ENCODE measurements at regions of chr10 and their contacts with region 1.

Region 1: GRCh38 chr10:31864834-31865518 is 63.7 kb downstream of the ARHGAP12 start:
- DNase-seq: no peak
- ATAC-seq: no peak
- H3K4me3 Mint-ChIP-seq: no peak overlapping the region
- H3K27ac Mint-ChIP-seq: peak overlapping the region; percentile 3
- H3K4me1 Mint-ChIP-seq: peaks cover 30% of the 10 kb centered on the region
- H3K27me3 Mint-ChIP-seq: no peaks in the 10 kb centered on the region

Region 2: DNA sequence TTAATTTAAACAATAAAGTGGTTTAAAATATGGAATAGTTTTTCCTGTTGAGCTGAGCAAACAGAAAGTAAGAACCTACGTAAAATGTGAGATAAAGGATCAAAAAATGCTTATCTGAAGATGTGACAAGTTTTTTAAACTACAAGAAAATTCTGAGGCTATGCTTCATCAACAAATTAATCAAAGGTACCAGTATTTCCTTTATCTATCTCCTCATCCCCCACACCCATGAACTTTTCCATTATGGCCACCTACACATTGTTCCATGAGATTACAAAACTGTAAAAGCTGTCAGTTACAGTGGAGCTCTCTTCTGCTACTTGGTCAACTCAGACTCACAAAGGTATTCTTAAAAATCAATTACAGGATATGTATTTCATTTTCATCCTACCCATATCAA is 13.8 kb before region 1 on chr10:
- CTCF ChIA-PET with region 1: interaction called, 12 read pairs
- POLR2A ChIA-PET with region 1: interaction called, 3 read pairs
- intact Hi-C with region 1: no loop called
- DNase-seq: no peak
- ATAC-seq: no peak
- H3K4me3 Mint-ChIP-seq: no peak overlapping the region
- H3K27ac Mint-ChIP-seq: no peak overlapping the region
- H3K4me1 Mint-ChIP-seq: peaks cover 19% of the 10 kb centered on the region
- H3K27me3 Mint-ChIP-seq: no peaks in the 10 kb centered on the region

Region 3: GRCh38 chr10:31875608-31876007 is 10.6 kb after region 1 on chr10:
- CTCF ChIA-PET with region 1: interaction called, 14 read pairs
- POLR2A ChIA-PET with region 1: no interaction called
- intact Hi-C with region 1: no loop called
- DNase-seq: peak; percentile 28
- ATAC-seq: peak; percentile 65
- H3K4me3 Mint-ChIP-seq: no peak overlapping the region
- H3K27ac Mint-ChIP-seq: no peak overlapping the region
- H3K4me1 Mint-ChIP-seq: peaks cover 35% of the 10 kb centered on the region
- H3K27me3 Mint-ChIP-seq: no peaks in the 10 kb centered on the region

Region 4: GRCh38 chr10:31908157-31908556 is 43.2 kb after region 1 on chr10:
- CTCF ChIA-PET with region 1: no interaction called
- POLR2A ChIA-PET with region 1: no interaction called
- intact Hi-C with region 1: no loop called
- DNase-seq: no peak
- ATAC-seq: no peak
- H3K4me3 Mint-ChIP-seq: no peak overlapping the region
- H3K27ac Mint-ChIP-seq: no peak overlapping the region
- H3K4me1 Mint-ChIP-seq: peaks cover 52% of the 10 kb centered on the region
- H3K27me3 Mint-ChIP-seq: no peaks in the 10 kb centered on the region

Region 5: GRCh38 chr10:31947144-31947926 is 82.4 kb after region 1 on chr10:
- CTCF ChIA-PET with region 1: interaction called, 7 read pairs
- POLR2A ChIA-PET with region 1: no interaction called
- intact Hi-C with region 1: loop called in 1 of 2 experiments (anchors 5 kb)
- DNase-seq: no peak
- ATAC-seq: no peak
- H3K4me3 Mint-ChIP-seq: no peak overlapping the region
- H3K27ac Mint-ChIP-seq: no peak overlapping the region
- H3K4me1 Mint-ChIP-seq: peaks cover 12% of the 10 kb centered on the region
- H3K27me3 Mint-ChIP-seq: no peaks in the 10 kb centered on the region

Region 6: DNA sequence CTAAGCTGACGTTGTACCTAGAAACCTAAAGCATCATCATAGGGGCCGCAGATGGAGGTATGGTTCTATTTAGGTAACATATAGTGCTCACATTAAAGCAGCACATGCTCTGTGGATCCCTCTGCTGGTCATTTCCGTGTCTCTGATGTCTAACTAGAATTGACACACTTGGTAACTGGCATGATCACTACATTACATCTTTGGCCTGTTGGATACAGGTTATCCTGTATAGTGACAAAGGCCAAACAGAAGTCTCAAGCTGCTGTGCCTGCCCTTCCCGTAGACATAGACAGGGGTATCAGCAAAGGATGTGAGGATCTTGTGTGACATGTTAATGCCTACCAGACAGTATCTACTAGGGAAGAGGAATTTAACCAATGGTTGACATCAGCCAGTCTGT is 140.1 kb after region 1 on chr10:
- CTCF ChIA-PET with region 1: interaction called, 61 read pairs
- POLR2A ChIA-PET with region 1: no interaction called
- intact Hi-C with region 1: loop called (anchors 1 kb)
- DNase-seq: peak; percentile 66
- ATAC-seq: peak; percentile 69
- H3K4me3 Mint-ChIP-seq: no peak overlapping the region
- H3K27ac Mint-ChIP-seq: peak overlapping the region; percentile 38
- H3K4me1 Mint-ChIP-seq: peaks cover 11% of the 10 kb centered on the region
- H3K27me3 Mint-ChIP-seq: no peaks in the 10 kb centered on the region

Region 7: GRCh38 chr10:32207544-32207943 is 342.6 kb after region 1 on chr10:
- CTCF ChIA-PET with region 1: interaction called, 4 read pairs
- POLR2A ChIA-PET with region 1: no interaction called
- intact Hi-C with region 1: loop called (anchors 1 to 2 kb)
- DNase-seq: peak; percentile 81
- ATAC-seq: peak; percentile 77
- H3K4me3 Mint-ChIP-seq: no peak overlapping the region
- H3K27ac Mint-ChIP-seq: no peak overlapping the region
- H3K4me1 Mint-ChIP-seq: peaks cover 2% of the 10 kb centered on the region
- H3K27me3 Mint-ChIP-seq: no peaks in the 10 kb centered on the region

Measured in activated CD4-positive, alpha-beta T cell treated with anti-CD3 and anti-CD28 coated beads for 36 hours (primary cell).